Caco-2 (cell line): ENCODE measurements at regions of chr3 and their contacts with region 1.

Region 1: GRCh38 chr3:5144316-5145011 is 22.4 kb downstream of the ARL8B start:
- DNase-seq: peak in 1 of 2 experiments; percentile 59
- H3K4me3 ChIP-seq: no peak overlapping the region
- H3K4me3 Mint-ChIP-seq: peak overlapping the region; percentile 15
- H3K27ac Mint-ChIP-seq: peak overlapping the region; percentile 42
- H3K4me1 ChIP-seq: peaks cover 17% of the 10 kb centered on the region
- H3K4me1 Mint-ChIP-seq: peaks cover 31% of the 10 kb centered on the region
- H3K27me3 ChIP-seq: no peaks in the 10 kb centered on the region
- H3K27me3 Mint-ChIP-seq: no peaks in the 10 kb centered on the region
- CTCF ChIP-seq: peak in 1 of 2 experiments; percentile 11

Region 2: DNA sequence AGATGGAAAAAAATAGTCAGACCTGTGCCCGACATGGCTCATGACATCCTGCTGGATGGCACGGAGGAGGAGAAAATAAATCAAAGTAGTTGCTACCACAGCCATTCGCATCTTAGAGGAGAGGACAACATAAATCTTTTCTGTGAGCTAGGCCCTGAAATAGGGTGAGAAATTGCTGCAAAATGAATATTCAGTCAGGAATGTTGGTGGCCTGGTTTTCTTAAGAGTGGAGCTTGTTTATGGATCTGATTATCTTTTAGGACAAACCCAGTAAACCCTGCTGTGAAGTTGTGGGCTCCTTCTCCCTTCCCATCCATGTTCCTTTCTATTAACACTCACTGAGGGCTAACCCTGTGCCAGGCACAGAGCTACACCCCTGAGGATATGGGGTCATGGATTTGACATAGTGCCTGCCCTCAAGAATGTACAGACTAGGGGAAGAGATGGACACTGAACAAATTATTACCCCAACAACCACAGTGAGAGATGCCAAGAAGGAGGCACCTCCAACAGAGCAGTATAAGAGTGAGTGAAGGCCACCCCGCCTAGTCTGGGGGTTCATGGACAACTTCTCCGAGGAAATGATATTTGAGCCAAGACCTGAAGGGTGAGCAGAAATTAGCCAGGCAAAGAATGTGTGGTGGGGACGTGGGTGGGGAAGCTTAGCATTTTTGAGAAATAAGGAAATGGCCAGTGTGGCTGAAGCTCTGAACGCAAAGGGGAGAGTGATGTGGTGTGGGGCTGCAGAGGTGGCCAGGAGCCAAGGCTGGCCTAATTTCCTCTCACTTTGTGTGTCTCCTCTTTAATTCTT is 91.2 kb before region 1 on chr3:
- CTCF ChIA-PET with region 1: no interaction called
- POLR2A ChIA-PET with region 1: no interaction called
- intact Hi-C with region 1: no loop called
- DNase-seq: no peak
- H3K4me3 ChIP-seq: no peak overlapping the region
- H3K4me3 Mint-ChIP-seq: no peak overlapping the region
- H3K27ac Mint-ChIP-seq: no peak overlapping the region
- H3K4me1 ChIP-seq: no peaks in the 10 kb centered on the region
- H3K4me1 Mint-ChIP-seq: no peaks in the 10 kb centered on the region
- H3K27me3 ChIP-seq: no peaks in the 10 kb centered on the region
- H3K27me3 Mint-ChIP-seq: no peaks in the 10 kb centered on the region
- CTCF ChIP-seq: no peak

Region 3: GRCh38 chr3:5162102-5162501 is 17.6 kb after region 1 on chr3:
- CTCF ChIA-PET with region 1: no interaction called
- POLR2A ChIA-PET with region 1: no interaction called
- intact Hi-C with region 1: loop called (anchors 2 kb)
- DNase-seq: peak in 1 of 2 experiments; percentile 18
- H3K4me3 ChIP-seq: no peak overlapping the region
- H3K4me3 Mint-ChIP-seq: no peak overlapping the region
- H3K27ac Mint-ChIP-seq: no peak overlapping the region
- H3K4me1 ChIP-seq: peaks cover 20% of the 10 kb centered on the region
- H3K4me1 Mint-ChIP-seq: peaks cover 14% of the 10 kb centered on the region
- H3K27me3 ChIP-seq: no peaks in the 10 kb centered on the region
- H3K27me3 Mint-ChIP-seq: no peaks in the 10 kb centered on the region
- CTCF ChIP-seq: no peak